ENCODE measurements at regions of chr2 and their contacts with region 1.

Region 1: GRCh38 chr2:54723131-54723995 is at the start of gene EML6:
- DNase-seq: peak; percentile 94 to 99 (median 98)
- ATAC-seq: peak; percentile 98
- H3K4me3 ChIP-seq: peak within 1 kb of the TSS; percentile 77
- H3K4me3 Mint-ChIP-seq: peak within 1 kb of the TSS; percentile 87 to 97 (median 92)
- H3K27ac ChIP-seq: peak within 1 kb of the TSS; percentile 70
- H3K27ac Mint-ChIP-seq: peak within 1 kb of the TSS; percentile 50 to 90 (median 71)
- H3K4me1 ChIP-seq: peaks cover 0 to 6% of the 10 kb centered on the region in 2 donors
- H3K4me1 Mint-ChIP-seq: peaks cover 10 to 20% (median 12%) of the 10 kb centered on the region in 7 donors
- H3K27me3 ChIP-seq: peaks cover 0 to 5% of the 10 kb centered on the region in 2 donors
- H3K27me3 Mint-ChIP-seq: peaks cover 34 to 79% (median 51%) of the 10 kb centered on the region in 5 donors
- total RNA-seq, gene EML6: 0.32 to 2.5 (median 1.5) TPM

Region 2: DNA sequence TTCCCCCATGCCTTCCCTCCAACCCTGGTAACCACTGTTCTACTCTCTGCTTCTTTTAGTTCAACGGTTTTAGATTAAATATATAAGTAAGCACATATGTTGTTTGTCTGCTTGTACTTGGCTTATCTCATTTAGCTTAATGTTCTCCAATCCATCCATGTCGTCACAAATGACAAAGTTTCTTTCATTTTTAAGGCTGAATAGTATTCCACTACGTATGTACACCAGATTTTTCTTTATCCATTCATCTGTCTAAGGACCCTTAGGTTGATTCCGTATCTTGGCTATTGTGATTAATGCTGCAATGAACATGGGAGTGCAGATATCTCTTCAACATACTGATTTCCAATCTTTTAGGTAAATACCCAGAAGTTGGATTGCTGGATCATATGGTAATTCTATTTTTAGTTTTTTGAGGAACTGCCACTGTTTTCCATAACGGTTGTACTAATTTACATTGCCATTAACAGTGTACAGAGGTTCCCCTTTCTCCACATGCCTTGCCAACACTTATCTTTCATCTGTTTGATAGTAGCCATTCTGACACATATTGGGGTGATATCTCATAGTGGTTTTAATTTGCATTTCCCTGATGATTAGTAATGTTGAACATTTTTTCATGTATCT is 944.7 kb before region 1 on chr2:
- CTCF ChIA-PET with region 1: no interaction called
- POLR2A ChIA-PET with region 1: no interaction called
- intact Hi-C with region 1: no loop called
- DNase-seq: no peak
- ATAC-seq: peak; percentile 55
- H3K4me3 ChIP-seq: no peak overlapping the region
- H3K4me3 Mint-ChIP-seq: no peak overlapping the region
- H3K27ac ChIP-seq: no peak overlapping the region
- H3K27ac Mint-ChIP-seq: peak overlapping the region in 2 of 9 donors; percentile 54 to 71
- H3K4me1 ChIP-seq: no peaks in the 10 kb centered on the region
- H3K4me1 Mint-ChIP-seq: peaks cover 22 to 53% (median 39%) of the 10 kb centered on the region in 7 donors
- H3K27me3 ChIP-seq: no peaks in the 10 kb centered on the region
- H3K27me3 Mint-ChIP-seq: no peaks in the 10 kb centered on the region

Region 3: GRCh38 chr2:53970724-53971602 is 752.4 kb before region 1 on chr2 and contains the start of gene PSME4:
- CTCF ChIA-PET with region 1: no interaction called
- POLR2A ChIA-PET with region 1: no interaction called
- intact Hi-C with region 1: loop called (anchors 1 kb)
- DNase-seq: peak; percentile 80 to 95 (median 90)
- ATAC-seq: peak; percentile 97
- H3K4me3 ChIP-seq: peak within 1 kb of the TSS; percentile 84
- H3K4me3 Mint-ChIP-seq: peak within 1 kb of the TSS; percentile 89 to 100 (median 96)
- H3K27ac ChIP-seq: peak within 1 kb of the TSS; percentile 93
- H3K27ac Mint-ChIP-seq: peak within 1 kb of the TSS; percentile 91 to 99 (median 95)
- H3K4me1 ChIP-seq: peaks cover 17 to 21% of the 10 kb centered on the region in 2 donors
- H3K4me1 Mint-ChIP-seq: peaks cover 37 to 65% (median 54%) of the 10 kb centered on the region in 7 donors
- H3K27me3 ChIP-seq: no peaks in the 10 kb centered on the region
- H3K27me3 Mint-ChIP-seq: no peaks in the 10 kb centered on the region
- total RNA-seq, gene PSME4: 48.8 to 80.1 (median 54.4) TPM

Region 4: GRCh38 chr2:54503192-54503591 is 220.2 kb before region 1 on chr2:
- CTCF ChIA-PET with region 1: no interaction called
- POLR2A ChIA-PET with region 1: no interaction called
- intact Hi-C with region 1: no loop called
- DNase-seq: peak in 1 of 9 donors; percentile 15
- ATAC-seq: no peak
- H3K4me3 ChIP-seq: no peak overlapping the region
- H3K4me3 Mint-ChIP-seq: no peak overlapping the region
- H3K27ac ChIP-seq: no peak overlapping the region
- H3K27ac Mint-ChIP-seq: no peak overlapping the region
- H3K4me1 ChIP-seq: no peaks in the 10 kb centered on the region
- H3K4me1 Mint-ChIP-seq: no peaks in the 10 kb centered on the region
- H3K27me3 ChIP-seq: no peaks in the 10 kb centered on the region
- H3K27me3 Mint-ChIP-seq: peaks cover 0 to 19% (median 0%) of the 10 kb centered on the region in 5 donors

Region 5: DNA sequence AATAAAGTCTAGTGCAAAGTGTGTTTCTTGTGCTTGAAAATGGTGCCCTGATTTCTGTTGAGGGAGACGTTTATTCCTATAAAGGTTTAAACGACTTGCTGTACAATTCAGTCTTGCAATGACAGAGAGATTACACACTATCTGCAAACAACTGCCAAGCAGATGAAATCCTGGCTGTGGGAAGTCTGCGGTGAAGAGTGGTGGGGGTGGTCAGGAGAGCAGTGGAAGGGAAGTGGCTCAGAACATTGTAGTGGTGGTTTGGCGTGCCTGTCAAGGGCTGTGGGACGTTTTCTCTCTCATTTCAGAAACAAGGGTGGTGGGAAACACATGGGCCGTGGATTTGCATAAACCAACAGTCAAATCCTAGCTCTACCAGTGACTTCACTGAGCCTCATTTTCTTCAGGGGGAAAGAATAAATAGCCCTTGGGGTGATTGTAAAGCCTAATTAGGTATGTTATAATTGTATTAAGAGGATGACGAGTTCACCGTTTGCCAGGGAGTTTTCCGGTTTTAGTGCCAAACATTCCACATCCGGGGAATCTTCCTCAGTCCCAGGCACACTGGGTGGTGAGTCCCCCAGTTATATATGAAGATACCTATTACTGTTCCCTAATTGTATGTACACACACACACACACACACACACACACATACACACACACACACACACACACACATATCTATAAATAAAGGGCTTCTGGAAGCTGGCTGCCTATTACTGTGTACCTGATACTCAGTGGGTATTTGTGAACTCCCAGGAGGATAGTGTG is 152.3 kb before region 1 on chr2:
- CTCF ChIA-PET with region 1: no interaction called
- POLR2A ChIA-PET with region 1: interaction called, 3 read pairs
- intact Hi-C with region 1: loop called (anchors 1 kb)
- DNase-seq: peak in 8 of 9 donors; percentile 61 to 84 (median 68)
- ATAC-seq: peak; percentile 24
- H3K4me3 ChIP-seq: peak overlapping the region; percentile 58
- H3K4me3 Mint-ChIP-seq: peak overlapping the region; percentile 72 to 94 (median 88)
- H3K27ac ChIP-seq: peak overlapping the region; percentile 95
- H3K27ac Mint-ChIP-seq: peak overlapping the region; percentile 90 to 99 (median 97)
- H3K4me1 ChIP-seq: peaks cover 76 to 91% of the 10 kb centered on the region in 2 donors
- H3K4me1 Mint-ChIP-seq: peaks cover 68 to 100% (median 93%) of the 10 kb centered on the region in 7 donors
- H3K27me3 ChIP-seq: no peaks in the 10 kb centered on the region
- H3K27me3 Mint-ChIP-seq: no peaks in the 10 kb centered on the region

Region 6: GRCh38 chr2:54838585-54839035 is 115.2 kb after region 1 on chr2:
- CTCF ChIA-PET with region 1: interaction called, 4 read pairs
- POLR2A ChIA-PET with region 1: no interaction called
- intact Hi-C with region 1: loop called (anchors 1 to 10 kb)
- DNase-seq: peak; percentile 25 to 61 (median 45)
- ATAC-seq: peak; percentile 87
- H3K4me3 ChIP-seq: no peak overlapping the region
- H3K4me3 Mint-ChIP-seq: no peak overlapping the region
- H3K27ac ChIP-seq: no peak overlapping the region
- H3K27ac Mint-ChIP-seq: no peak overlapping the region
- H3K4me1 ChIP-seq: no peaks in the 10 kb centered on the region
- H3K4me1 Mint-ChIP-seq: no peaks in the 10 kb centered on the region
- H3K27me3 ChIP-seq: no peaks in the 10 kb centered on the region
- H3K27me3 Mint-ChIP-seq: peaks cover 0 to 2% (median 0%) of the 10 kb centered on the region in 5 donors

Region 7: GRCh38 chr2:55175254-55176025 is 452.1 kb after region 1 on chr2:
- CTCF ChIA-PET with region 1: interaction called, 3 read pairs
- POLR2A ChIA-PET with region 1: no interaction called
- intact Hi-C with region 1: loop called in 1 of 2 experiments (anchors 10 kb)
- DNase-seq: peak in 7 of 9 donors; percentile 40 to 69 (median 63)
- ATAC-seq: peak; percentile 96
- H3K4me3 ChIP-seq: no peak overlapping the region
- H3K4me3 Mint-ChIP-seq: peak overlapping the region in 7 of 10 donors; percentile 0 to 49 (median 24)
- H3K27ac ChIP-seq: no peak overlapping the region
- H3K27ac Mint-ChIP-seq: peak overlapping the region in 5 of 9 donors; percentile 2 to 69 (median 46)
- H3K4me1 ChIP-seq: no peaks in the 10 kb centered on the region
- H3K4me1 Mint-ChIP-seq: peaks cover 0 to 10% (median 8%) of the 10 kb centered on the region in 7 donors
- H3K27me3 ChIP-seq: no peaks in the 10 kb centered on the region
- H3K27me3 Mint-ChIP-seq: no peaks in the 10 kb centered on the region

Region 8: GRCh38 chr2:55419679-55420438 is 696.5 kb after region 1 on chr2 and contains the start of gene CCDC88A:
- CTCF ChIA-PET with region 1: no interaction called
- POLR2A ChIA-PET with region 1: no interaction called
- intact Hi-C with region 1: loop called (anchors 2 to 5 kb)
- DNase-seq: peak; percentile 78 to 91 (median 85)
- ATAC-seq: peak; percentile 92
- H3K4me3 ChIP-seq: peak within 1 kb of the TSS; percentile 91
- H3K4me3 Mint-ChIP-seq: peak within 1 kb of the TSS; percentile 86 to 98 (median 94)
- H3K27ac ChIP-seq: peak within 1 kb of the TSS; percentile 69
- H3K27ac Mint-ChIP-seq: peak within 1 kb of the TSS; percentile 50 to 97 (median 85)
- H3K4me1 ChIP-seq: peaks cover 0 to 6% of the 10 kb centered on the region in 2 donors
- H3K4me1 Mint-ChIP-seq: peaks cover 5 to 49% (median 41%) of the 10 kb centered on the region in 7 donors
- H3K27me3 ChIP-seq: no peaks in the 10 kb centered on the region
- H3K27me3 Mint-ChIP-seq: peaks cover 0 to 40% (median 0%) of the 10 kb centered on the region in 5 donors
- total RNA-seq, gene CCDC88A: 9.9 to 53.3 (median 15.9) TPM

Measured in naive thymus-derived CD4-positive, alpha-beta T cell (primary cell).